Sigmoid colon (tissue), 7 donors: ENCODE measurements at regions of chr3 and their contacts with region 1.

Region 1: GRCh38 chr3:188947401-188948280 is 224.1 kb upstream of the TPRG1 start:
- DNase-seq: peak; percentile 99
- H3K4me3 ChIP-seq: peak overlapping the region; percentile 12 to 46 (median 42)
- H3K27ac ChIP-seq: peak overlapping the region; percentile 92 to 97 (median 96)
- H3K4me1 ChIP-seq: peaks cover 0 to 63% (median 50%) of the 10 kb centered on the region in 4 donors
- H3K27me3 ChIP-seq: no peaks in the 10 kb centered on the region
- CTCF ChIP-seq: peak; percentile 24 to 64 (median 30)
- EP300 ChIP-seq: peak; percentile 100
- POLR2A ChIP-seq: peak; percentile 28 to 32

Region 2: DNA sequence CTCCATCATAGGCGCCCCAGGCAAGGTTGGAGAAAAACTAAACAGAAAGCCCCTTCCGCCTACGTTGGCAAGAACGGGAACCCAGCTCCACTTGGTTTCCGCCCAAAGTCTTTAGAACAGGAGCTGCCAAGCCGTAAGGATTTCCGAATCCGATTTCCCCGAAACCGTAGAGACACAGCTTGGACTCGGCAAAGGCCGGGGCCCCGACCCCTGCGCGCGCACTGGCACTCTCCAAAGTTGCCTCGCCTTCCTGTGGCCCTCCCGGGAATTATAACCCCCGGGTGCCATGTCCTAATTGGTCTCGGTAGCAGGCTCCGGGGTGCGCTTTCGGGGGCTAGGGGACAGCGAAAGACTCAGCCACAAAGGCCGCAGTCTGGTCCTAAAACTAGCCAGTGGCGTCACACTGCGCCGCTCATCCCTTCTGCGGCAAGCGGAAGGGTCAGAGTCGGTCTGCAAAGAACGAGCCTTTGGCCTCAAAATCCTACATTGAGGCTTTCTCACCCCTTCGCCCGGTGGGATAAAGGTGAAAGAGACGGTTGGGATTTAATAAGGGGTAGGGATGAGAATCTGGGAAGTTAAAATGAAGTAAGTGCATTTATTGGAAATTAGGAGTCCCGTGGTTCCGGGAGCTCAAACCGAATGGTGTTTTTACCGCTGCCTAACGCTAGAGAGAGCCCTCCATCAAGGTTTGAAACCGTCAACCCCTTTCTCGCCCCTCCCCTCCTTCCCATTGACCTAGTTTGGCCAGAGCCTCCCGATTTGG is 1209.1 kb before region 1 on chr3:
- intact Hi-C with region 1: loop called (anchors 1 kb)
- DNase-seq: peak; percentile 97
- H3K4me3 ChIP-seq: peak overlapping the region; percentile 53 to 88 (median 68)
- H3K27ac ChIP-seq: peak overlapping the region; percentile 90 to 99 (median 96)
- H3K4me1 ChIP-seq: peaks cover 0 to 76% (median 43%) of the 10 kb centered on the region in 4 donors
- H3K27me3 ChIP-seq: no peaks in the 10 kb centered on the region
- CTCF ChIP-seq: peak; percentile 55 to 72 (median 64)
- EP300 ChIP-seq: peak in 2 of 4 donors; percentile 24 to 45
- POLR2A ChIP-seq: peak; percentile 23 to 34

Region 3: GRCh38 chr3:188220988-188221818 is 726.4 kb before region 1 on chr3:
- intact Hi-C with region 1: loop called (anchors 5 kb)
- DNase-seq: peak; percentile 91
- H3K4me3 ChIP-seq: peak overlapping the region in 2 of 4 donors; percentile 22 to 25
- H3K27ac ChIP-seq: peak overlapping the region; percentile 84 to 97 (median 93)
- H3K4me1 ChIP-seq: peaks cover 2 to 99% (median 95%) of the 10 kb centered on the region in 4 donors
- H3K27me3 ChIP-seq: no peaks in the 10 kb centered on the region
- CTCF ChIP-seq: no peak
- EP300 ChIP-seq: peak; percentile 95 to 100 (median 100)
- POLR2A ChIP-seq: no peak

Region 4: DNA sequence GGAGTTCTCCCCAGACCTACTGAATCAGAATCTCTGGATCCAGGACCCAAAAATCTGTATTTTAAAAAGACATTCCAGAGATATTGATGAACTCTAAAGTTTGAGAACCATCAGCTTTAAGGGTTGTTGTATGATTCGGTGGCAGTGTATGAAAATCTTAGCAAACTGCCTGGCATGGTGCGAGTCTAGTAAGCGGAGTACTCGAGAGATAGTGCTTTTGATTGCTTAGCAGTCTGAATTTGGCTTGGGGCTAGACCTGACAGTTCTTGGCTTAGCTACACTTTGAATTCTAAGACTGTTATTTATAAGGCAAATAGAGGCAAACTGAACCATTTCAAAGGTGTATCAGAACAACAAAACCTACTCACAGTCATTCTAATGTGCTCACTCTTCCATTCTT is 464.7 kb before region 1 on chr3:
- intact Hi-C with region 1: loop called (anchors 5 kb)
- DNase-seq: no peak
- H3K4me3 ChIP-seq: no peak overlapping the region
- H3K27ac ChIP-seq: peak overlapping the region in 3 of 4 donors; percentile 9 to 35 (median 20)
- H3K4me1 ChIP-seq: peaks cover 0 to 80% (median 66%) of the 10 kb centered on the region in 4 donors
- H3K27me3 ChIP-seq: no peaks in the 10 kb centered on the region
- CTCF ChIP-seq: no peak
- EP300 ChIP-seq: no peak
- POLR2A ChIP-seq: no peak

Region 5: GRCh38 chr3:188780193-188781147 is 167.2 kb before region 1 on chr3:
- intact Hi-C with region 1: loop called (anchors 5 kb)
- DNase-seq: peak; percentile 74
- H3K4me3 ChIP-seq: no peak overlapping the region
- H3K27ac ChIP-seq: peak overlapping the region; percentile 55 to 77 (median 64)
- H3K4me1 ChIP-seq: peaks cover 0 to 67% (median 51%) of the 10 kb centered on the region in 4 donors
- H3K27me3 ChIP-seq: no peaks in the 10 kb centered on the region
- CTCF ChIP-seq: no peak
- EP300 ChIP-seq: peak; percentile 17 to 86 (median 64)
- POLR2A ChIP-seq: no peak

Region 6: GRCh38 chr3:188819939-188820338 is 127.7 kb before region 1 on chr3:
- intact Hi-C with region 1: no loop called
- DNase-seq: no peak
- H3K4me3 ChIP-seq: no peak overlapping the region
- H3K27ac ChIP-seq: peak overlapping the region in 3 of 4 donors; percentile 37 to 47 (median 45)
- H3K4me1 ChIP-seq: peaks cover 0 to 75% (median 57%) of the 10 kb centered on the region in 4 donors
- H3K27me3 ChIP-seq: no peaks in the 10 kb centered on the region
- CTCF ChIP-seq: no peak
- EP300 ChIP-seq: no peak
- POLR2A ChIP-seq: no peak

Region 7: GRCh38 chr3:188978421-188979171 is 31.0 kb after region 1 on chr3:
- intact Hi-C with region 1: no loop called
- DNase-seq: peak; percentile 83
- H3K4me3 ChIP-seq: no peak overlapping the region
- H3K27ac ChIP-seq: peak overlapping the region in 3 of 4 donors; percentile 24 to 53 (median 46)
- H3K4me1 ChIP-seq: peaks cover 0 to 14% (median 5%) of the 10 kb centered on the region in 4 donors
- H3K27me3 ChIP-seq: no peaks in the 10 kb centered on the region
- CTCF ChIP-seq: no peak
- EP300 ChIP-seq: no peak
- POLR2A ChIP-seq: no peak

Region 8: DNA sequence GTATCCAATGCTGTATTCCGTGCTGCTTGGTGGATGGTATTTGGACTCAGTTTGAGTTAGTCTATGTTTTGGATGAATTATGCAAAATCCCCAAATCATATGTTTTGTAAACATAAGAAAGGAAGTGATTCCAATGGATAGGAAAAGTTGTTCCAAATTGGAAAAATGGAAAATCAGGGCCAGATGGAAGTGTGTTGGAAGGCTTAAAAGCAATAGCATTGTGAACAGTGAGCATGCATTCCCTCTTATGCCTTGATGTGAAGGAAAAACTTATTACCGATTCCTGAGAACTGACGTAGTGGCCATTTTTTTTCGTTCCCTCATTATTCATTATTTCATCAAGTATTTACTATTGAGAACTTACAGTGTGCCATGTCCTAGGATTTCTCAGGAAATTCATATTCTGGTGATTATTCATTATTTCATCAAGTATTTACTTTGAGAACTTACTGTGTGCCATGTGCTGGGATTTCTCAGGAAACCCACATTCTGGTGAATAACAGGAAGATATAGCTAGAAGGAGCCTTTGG is 80.0 kb after region 1 on chr3:
- intact Hi-C with region 1: no loop called
- DNase-seq: no peak
- H3K4me3 ChIP-seq: no peak overlapping the region
- H3K27ac ChIP-seq: no peak overlapping the region
- H3K4me1 ChIP-seq: no peaks in the 10 kb centered on the region
- H3K27me3 ChIP-seq: no peaks in the 10 kb centered on the region
- CTCF ChIP-seq: no peak
- EP300 ChIP-seq: no peak
- POLR2A ChIP-seq: no peak